Ascending aorta (tissue), 2 donors: ENCODE measurements at regions of chr12 and their contacts with region 1.

Region 1: DNA sequence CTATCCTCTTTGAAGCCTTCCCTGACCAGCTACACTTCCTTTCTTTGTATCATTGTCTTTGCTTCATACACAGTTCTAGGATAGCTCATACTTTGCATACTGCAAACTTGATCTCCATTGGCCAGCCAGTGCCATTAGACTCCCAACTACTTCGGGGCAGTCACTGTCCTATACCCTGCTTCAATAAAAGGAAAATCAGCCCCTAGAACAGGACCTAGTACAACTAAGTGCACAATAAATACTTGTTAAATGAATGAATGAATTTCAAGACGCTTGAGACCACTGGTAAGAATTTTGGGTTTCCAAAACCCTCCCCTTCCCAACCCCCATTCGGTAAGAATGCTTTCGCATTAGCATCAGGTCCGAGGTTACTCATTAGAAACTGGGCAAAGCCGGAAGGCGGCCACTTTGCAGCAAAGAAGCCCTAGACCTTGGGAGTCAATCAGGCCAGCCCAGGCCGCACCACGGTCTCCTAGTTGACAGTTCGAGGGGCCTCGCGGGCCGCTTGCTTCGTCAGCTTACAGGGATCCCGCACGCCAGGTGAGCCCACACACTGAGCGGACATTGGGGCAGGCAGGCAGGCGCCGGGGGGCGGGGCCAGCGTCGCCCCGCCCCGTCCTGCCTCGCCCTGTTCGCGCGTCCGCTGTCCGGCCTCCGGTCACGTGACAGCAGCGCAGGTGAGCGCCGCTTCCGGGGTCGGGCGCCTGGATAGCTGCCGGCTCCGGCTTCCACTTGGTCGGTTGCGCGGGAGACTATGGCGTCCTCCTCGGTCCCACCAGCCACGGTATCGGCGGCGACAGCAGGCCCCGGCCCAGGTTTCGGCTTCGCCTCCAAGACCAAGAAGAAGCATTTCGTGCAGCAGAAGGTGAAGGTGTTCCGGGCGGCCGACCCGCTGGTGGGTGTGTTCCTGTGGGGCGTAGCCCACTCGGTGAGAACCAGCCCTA is at the start of gene PIP4K2C:
- DNase-seq: peak; percentile 53 to 86
- H3K4me3 ChIP-seq: peak within 1 kb of the TSS; percentile 79 to 99
- H3K27ac ChIP-seq: peak within 1 kb of the TSS; percentile 82 to 89
- H3K4me1 ChIP-seq: peaks cover 0 to 19% of the 10 kb centered on the region in 2 donors
- H3K27me3 ChIP-seq: no peaks in the 10 kb centered on the region
- CTCF ChIP-seq: no peak
- total RNA-seq, gene PIP4K2C: 153 TPM

Region 2: DNA sequence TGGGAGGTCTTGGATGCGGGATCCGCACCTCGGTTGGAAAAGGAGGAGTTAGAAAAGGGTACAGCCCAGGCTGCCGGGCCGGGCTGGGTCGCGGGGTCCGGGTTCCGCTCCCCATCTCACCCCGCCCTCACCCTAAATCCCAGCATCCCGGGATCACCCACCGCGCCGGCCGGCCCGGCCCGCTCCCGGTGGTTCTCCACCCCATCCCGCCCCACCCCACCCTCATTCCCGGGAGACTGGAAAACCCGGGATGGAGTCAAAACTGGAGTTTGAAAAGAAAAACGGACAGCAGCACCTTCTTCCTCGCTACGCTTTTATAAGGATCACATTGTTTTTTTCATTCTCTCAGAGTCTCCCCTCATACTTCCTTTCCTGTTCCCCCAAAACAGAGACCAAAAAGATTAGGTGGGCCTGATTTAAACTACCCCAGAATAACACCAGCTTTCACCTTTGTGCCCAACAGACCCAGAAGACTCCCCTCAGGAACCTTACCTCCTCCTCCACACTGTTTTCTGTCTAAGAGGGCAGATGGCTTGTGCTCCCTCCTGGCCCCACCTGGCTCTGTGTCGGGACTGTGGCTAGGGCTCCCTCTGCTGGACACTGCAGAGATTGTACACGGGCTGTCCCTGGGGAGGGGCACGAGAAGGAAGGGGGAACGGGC is 128.4 kb before region 1 on chr12:
- intact Hi-C with region 1: no loop called
- DNase-seq: peak in 1 of 2 donors; percentile 94
- H3K4me3 ChIP-seq: peak overlapping the region; percentile 71 to 89
- H3K27ac ChIP-seq: peak overlapping the region; percentile 76 to 87
- H3K4me1 ChIP-seq: peaks cover 3 to 30% of the 10 kb centered on the region in 2 donors
- H3K27me3 ChIP-seq: no peaks in the 10 kb centered on the region
- CTCF ChIP-seq: peak; percentile 93 to 97 (median 95)

Region 3: DNA sequence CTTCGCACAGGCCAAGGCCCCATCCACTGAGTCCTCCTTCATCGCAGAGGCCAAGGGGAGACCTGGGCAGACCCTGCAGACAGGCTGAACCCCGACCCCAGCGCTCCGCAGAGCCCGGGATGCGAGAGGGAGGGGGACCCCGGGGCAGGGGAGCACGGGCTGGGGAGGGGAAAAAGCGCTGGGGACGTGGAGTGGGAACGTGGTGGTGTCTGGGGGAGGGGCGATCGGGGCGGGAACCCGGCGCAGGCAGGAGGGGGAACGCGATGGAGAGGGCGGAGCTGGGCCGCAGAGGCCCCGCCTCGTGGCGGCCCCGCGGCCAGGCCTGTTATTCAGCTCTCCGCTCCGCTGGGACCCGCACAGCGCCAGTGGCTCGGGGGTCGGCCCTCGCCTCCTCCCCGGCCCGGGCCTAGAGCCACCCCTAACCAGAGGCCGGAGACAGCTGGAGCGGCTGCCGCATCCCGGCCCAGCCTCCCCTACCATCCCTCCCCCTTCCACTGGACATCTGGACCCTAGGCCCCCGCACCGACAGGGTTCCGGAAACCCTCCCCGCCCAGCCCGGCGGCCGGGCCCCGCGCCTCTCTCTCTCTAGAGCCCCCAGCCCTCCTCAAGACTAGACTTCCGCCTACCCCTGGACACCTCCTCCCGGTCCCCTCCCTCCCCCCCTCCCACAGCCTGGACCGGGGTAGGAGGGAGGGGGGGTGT is 20.5 kb after region 1 on chr12 and contains the start of gene ARHGEF25:
- intact Hi-C with region 1: loop called (anchors 2 kb)
- DNase-seq: peak in 1 of 2 donors; percentile 86
- H3K4me3 ChIP-seq: peak within 1 kb of the TSS; percentile 70 to 88
- H3K27ac ChIP-seq: peak within 1 kb of the TSS; percentile 87 to 97
- H3K4me1 ChIP-seq: peaks cover 6 to 39% of the 10 kb centered on the region in 2 donors
- H3K27me3 ChIP-seq: no peaks in the 10 kb centered on the region
- CTCF ChIP-seq: no peak
- total RNA-seq, gene ARHGEF25: 47.8 TPM

Region 4: DNA sequence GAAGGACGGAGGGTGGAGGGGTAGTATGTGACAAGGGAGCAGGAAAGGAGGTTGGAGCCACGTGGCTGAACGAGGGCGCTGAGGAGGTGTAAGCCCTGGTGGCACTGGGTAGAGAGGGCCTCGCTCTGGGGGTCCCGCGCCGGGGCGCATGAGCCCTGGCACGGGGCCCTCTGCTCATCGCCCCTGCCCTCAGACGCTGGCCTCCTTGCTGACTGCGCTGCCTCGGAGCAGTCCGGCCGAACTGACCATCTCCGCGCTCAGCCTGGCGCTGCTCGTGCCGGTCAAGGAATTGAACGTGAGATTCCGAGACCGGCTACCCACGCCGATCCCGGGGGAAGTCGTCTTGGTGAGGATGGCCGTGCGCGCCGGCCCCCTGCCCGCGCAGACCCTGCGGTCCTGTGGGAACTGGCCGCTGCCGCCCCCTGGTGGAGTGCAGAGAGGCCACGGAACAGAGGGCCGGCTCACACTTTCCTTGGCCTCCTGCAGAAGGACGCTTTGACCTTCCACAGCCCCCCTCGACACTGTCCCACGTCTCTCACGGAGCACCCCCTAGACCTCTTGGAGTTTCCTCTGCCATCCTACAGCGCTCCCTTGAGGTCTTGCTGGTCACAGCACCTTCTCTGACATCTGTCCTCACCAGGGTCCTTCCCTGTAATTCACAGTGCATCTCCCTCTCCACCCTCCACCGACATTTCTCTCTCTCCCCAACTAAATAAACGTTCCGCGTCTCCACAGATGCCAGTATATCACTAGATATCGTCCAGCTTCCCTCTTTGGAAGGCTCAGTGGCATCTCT is 30.9 kb after region 1 on chr12:
- intact Hi-C with region 1: loop called (anchors 2 kb)
- DNase-seq: peak in 1 of 2 donors; percentile 77
- H3K4me3 ChIP-seq: peak overlapping the region; percentile 15 to 60
- H3K27ac ChIP-seq: no peak overlapping the region
- H3K4me1 ChIP-seq: peaks cover 5 to 8% of the 10 kb centered on the region in 2 donors
- H3K27me3 ChIP-seq: no peaks in the 10 kb centered on the region
- CTCF ChIP-seq: peak; percentile 95 to 97 (median 96)